PC-3 (cell line): ENCODE measurements at regions of chr10 and their contacts with region 1.

Region 1: DNA sequence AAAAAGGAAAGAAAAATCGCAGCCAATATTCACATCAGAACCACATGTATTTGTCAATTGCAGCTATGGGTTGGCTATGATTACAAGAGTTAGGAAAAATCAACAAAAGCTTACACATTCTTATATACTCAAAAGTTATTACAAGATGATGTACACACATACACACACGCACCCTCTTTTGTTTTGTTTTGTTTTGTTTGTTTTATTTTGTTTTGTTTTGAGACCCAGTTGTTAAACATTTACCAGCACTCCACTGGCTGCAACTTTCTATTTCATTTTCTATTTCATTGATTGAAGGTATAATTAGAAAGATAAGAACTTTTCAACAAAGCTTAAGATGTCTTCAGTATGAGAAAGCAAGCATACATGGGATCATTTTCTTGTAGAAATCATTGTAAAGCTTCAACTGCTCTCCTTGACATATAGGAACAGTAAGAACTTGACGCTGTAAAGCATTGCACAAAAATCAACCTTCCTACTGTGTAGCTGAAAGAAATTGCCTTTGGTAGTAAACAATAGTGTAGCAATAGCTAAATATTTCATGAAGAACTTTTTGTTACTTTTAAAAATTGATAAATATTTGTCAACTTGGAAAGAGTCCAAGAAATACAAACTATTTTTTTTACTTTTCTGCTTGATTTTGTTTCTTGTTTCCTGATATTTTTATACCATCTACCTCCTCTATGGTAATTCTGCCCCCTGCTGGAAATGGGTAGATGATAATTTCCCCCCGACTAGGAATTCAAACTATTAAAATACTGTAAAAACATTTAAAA is 205.9 kb downstream of the MBL2 start:
- DNase-seq: peak; percentile 98
- ATAC-seq: peak; percentile 65
- H3K4me3 ChIP-seq: peak overlapping the region; percentile 39
- H3K27ac ChIP-seq: peak overlapping the region; percentile 49
- H3K4me1 ChIP-seq: peaks cover 42% of the 10 kb centered on the region
- H3K27me3 ChIP-seq: no peaks in the 10 kb centered on the region
- CTCF ChIP-seq: peak; percentile 100

Region 2: GRCh38 chr10:51001587-51001986 is 1565.1 kb before region 1 on chr10:
- CTCF ChIA-PET with region 1: no interaction called
- POLR2A ChIA-PET with region 1: no interaction called
- intact Hi-C with region 1: loop called (anchors 5 kb)
- DNase-seq: peak; percentile 85
- ATAC-seq: peak; percentile 87
- H3K4me3 ChIP-seq: no peak overlapping the region
- H3K27ac ChIP-seq: no peak overlapping the region
- H3K4me1 ChIP-seq: no peaks in the 10 kb centered on the region
- H3K27me3 ChIP-seq: peaks cover 73% of the 10 kb centered on the region
- CTCF ChIP-seq: peak; percentile 99

Region 3: GRCh38 chr10:52313933-52314816 is 252.5 kb before region 1 on chr10 and contains the start of gene DKK1:
- CTCF ChIA-PET with region 1: interaction called, 54 read pairs
- POLR2A ChIA-PET with region 1: interaction called, 10 read pairs
- intact Hi-C with region 1: loop called (anchors 1 kb)
- DNase-seq: peak; percentile 100
- ATAC-seq: peak; percentile 55
- H3K4me3 ChIP-seq: peak within 1 kb of the TSS; percentile 76
- H3K27ac ChIP-seq: peak within 1 kb of the TSS; percentile 82
- H3K4me1 ChIP-seq: peaks cover 49% of the 10 kb centered on the region
- H3K27me3 ChIP-seq: no peaks in the 10 kb centered on the region
- CTCF ChIP-seq: peak; percentile 100
- total RNA-seq, gene DKK1: 1,187 and 1,592 TPM in 2 replicates

Region 4: DNA sequence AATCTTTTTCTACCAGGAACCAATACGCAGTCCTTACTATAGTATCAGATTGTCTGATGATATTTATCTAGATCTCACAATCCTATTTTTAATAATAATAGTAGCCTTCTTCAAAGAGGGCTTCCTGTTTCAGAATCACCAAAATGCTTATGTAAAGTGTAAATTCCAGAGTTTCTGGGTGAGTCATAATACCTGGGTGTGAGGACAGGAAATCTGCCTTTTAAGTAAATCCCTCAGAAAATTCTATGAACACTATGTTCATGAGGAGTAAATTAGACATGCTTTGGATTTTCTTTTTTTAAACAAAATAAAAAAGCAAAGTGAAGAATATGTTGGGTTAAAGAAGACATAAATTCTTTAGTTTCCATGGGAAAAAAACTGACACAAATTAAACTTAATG is 232.1 kb before region 1 on chr10:
- CTCF ChIA-PET with region 1: no interaction called
- POLR2A ChIA-PET with region 1: no interaction called
- intact Hi-C with region 1: no loop called
- DNase-seq: peak; percentile 93
- ATAC-seq: peak; percentile 53
- H3K4me3 ChIP-seq: 0 out of 2 replicates have a peak overlapping the region, but pooled peaks have one; percentile 0
- H3K27ac ChIP-seq: peak overlapping the region; percentile 74
- H3K4me1 ChIP-seq: peaks cover 52% of the 10 kb centered on the region
- H3K27me3 ChIP-seq: no peaks in the 10 kb centered on the region
- CTCF ChIP-seq: no peak

Region 5: DNA sequence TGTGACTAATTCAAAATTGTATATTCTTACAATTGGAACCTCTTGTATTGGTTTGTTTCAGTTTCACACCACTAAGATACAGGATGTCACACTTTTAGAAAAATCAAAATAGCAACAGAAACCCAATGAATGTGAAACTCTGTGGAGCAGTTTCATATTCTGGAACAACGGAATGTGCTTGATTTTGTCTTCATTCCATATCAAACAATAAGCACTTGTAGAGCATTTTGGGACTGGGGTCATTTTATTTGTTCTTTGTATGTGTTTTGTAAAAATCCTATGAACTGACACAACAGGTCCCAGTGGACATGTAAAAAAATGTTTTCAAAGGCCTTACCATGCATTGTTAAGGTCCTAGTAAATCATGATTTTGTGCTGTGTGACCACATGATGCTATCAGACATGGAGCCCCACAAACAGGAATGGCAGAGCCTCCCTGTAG is 129.4 kb before region 1 on chr10:
- CTCF ChIA-PET with region 1: no interaction called
- POLR2A ChIA-PET with region 1: interaction called, 10 read pairs
- intact Hi-C with region 1: no loop called
- DNase-seq: no peak
- ATAC-seq: no peak
- H3K4me3 ChIP-seq: no peak overlapping the region
- H3K27ac ChIP-seq: no peak overlapping the region
- H3K4me1 ChIP-seq: peaks cover 18% of the 10 kb centered on the region
- H3K27me3 ChIP-seq: no peaks in the 10 kb centered on the region
- CTCF ChIP-seq: no peak

Region 6: GRCh38 chr10:52451817-52452216 is 114.8 kb before region 1 on chr10:
- CTCF ChIA-PET with region 1: interaction called, 5 read pairs
- POLR2A ChIA-PET with region 1: interaction called, 13 read pairs
- intact Hi-C with region 1: no loop called
- DNase-seq: peak; percentile 100
- ATAC-seq: peak; percentile 65
- H3K4me3 ChIP-seq: peak overlapping the region; percentile 62
- H3K27ac ChIP-seq: peak overlapping the region; percentile 80
- H3K4me1 ChIP-seq: peaks cover 86% of the 10 kb centered on the region
- H3K27me3 ChIP-seq: no peaks in the 10 kb centered on the region
- CTCF ChIP-seq: no peak

Region 7: DNA sequence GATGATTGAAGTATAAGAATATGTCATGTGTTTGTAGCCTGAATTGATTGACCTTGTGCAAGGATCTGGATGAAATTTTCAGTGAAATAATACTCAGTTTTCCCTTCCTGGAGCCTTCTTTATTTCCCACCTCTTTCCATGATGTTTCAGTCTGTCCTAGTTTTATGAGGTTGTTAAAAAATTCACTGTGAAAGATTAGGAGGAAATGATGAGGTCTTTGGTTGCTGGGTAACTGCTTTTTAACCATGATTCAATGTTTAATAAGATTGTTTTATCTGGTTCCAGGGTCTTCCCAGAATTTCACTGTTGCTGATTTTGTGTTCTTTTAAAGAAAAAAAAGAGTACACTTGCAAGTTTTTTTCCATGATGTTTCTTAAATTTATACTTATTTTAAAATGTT is 15.6 kb before region 1 on chr10:
- CTCF ChIA-PET with region 1: no interaction called
- POLR2A ChIA-PET with region 1: interaction called, 11 read pairs
- intact Hi-C with region 1: loop called (anchors 1 kb)
- DNase-seq: peak; percentile 78
- ATAC-seq: peak; percentile 90
- H3K4me3 ChIP-seq: no peak overlapping the region
- H3K27ac ChIP-seq: peak overlapping the region; percentile 5
- H3K4me1 ChIP-seq: peaks cover 8% of the 10 kb centered on the region
- H3K27me3 ChIP-seq: no peaks in the 10 kb centered on the region
- CTCF ChIP-seq: no peak

Region 8: DNA sequence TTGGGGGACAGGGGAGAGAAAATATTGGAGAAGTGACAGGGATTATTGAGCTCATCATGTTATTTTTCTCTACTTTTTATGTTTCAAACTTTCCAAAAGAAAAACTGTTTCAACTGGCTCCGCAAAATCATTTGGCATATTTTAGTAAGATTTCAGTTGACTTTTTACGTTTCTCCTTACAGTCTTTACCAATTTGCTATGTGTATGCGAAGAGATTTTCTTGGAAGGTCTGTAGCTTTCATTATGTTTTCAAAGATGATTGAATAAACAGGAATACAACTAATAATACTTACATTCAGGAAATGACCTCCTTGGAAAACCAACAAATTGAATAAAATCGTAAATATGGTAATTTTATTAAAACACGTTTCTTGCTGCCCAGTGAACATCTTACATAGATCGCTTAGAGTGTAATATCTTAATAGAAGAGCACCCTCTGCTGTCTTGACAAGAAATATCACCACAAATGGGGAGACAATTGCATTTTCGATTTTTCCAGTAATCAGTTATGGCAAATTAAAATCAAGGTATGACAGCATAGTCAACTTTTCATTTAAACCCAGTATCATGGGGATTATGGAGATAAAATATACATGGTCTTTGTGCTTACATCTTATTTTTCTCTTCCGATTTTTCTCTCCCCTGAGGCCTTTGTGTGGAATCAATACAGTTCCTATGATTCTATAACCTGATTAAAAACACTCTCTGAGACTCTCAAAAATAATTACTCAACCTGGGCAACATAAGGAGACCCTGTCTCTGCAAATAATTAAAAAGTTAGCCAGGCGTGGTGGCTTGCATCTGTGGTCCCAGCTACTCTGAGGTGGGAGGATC is 162.8 kb after region 1 on chr10:
- CTCF ChIA-PET with region 1: interaction called, 4 read pairs
- POLR2A ChIA-PET with region 1: no interaction called
- intact Hi-C with region 1: loop called (anchors 1 kb)
- DNase-seq: peak; percentile 95
- ATAC-seq: peak; percentile 93
- H3K4me3 ChIP-seq: peak overlapping the region; percentile 41
- H3K27ac ChIP-seq: no peak overlapping the region
- H3K4me1 ChIP-seq: peaks cover 16% of the 10 kb centered on the region
- H3K27me3 ChIP-seq: no peaks in the 10 kb centered on the region
- CTCF ChIP-seq: peak; percentile 100